WTC11 (cell line): ENCODE measurements at regions of chr19 and their contacts with region 1.

Region 1: GRCh38 chr19:38095411-38096308 is 128.4 kb downstream of the DPF1 start:
- DNase-seq: peak; percentile 89
- ATAC-seq: peak; percentile 94
- H3K4me3 Mint-ChIP-seq: no peak overlapping the region
- H3K27ac Mint-ChIP-seq: peak overlapping the region; percentile 35
- H3K4me1 Mint-ChIP-seq: no peaks in the 10 kb centered on the region
- H3K27me3 Mint-ChIP-seq: no peaks in the 10 kb centered on the region
- CTCF ChIP-seq: peak; percentile 46; the same call in 1 of the 2 replicates

Region 2: GRCh38 chr19:37979547-37980082 is 116.0 kb before region 1 on chr19:
- CTCF ChIA-PET with region 1: no interaction called
- POLR2A ChIA-PET with region 1: interaction called, 10 read pairs
- DNase-seq: no peak
- ATAC-seq: peak; percentile 39; the same call in 1 of the 2 replicates
- H3K4me3 Mint-ChIP-seq: no peak overlapping the region
- H3K27ac Mint-ChIP-seq: peak overlapping the region; percentile 97
- H3K4me1 Mint-ChIP-seq: peaks cover 25% of the 10 kb centered on the region
- H3K27me3 Mint-ChIP-seq: no peaks in the 10 kb centered on the region
- CTCF ChIP-seq: no peak